HEK293 (cell line): ENCODE measurements at regions of chr17 and their contacts with region 1.

Region 1: GRCh38 chr17:27353461-27354050 is 59.6 kb downstream of the WSB1 start:
- H3K4me3 ChIP-seq: peak overlapping the region; percentile 79
- H3K27ac ChIP-seq: peak overlapping the region; percentile 85
- H3K4me1 ChIP-seq: no peaks in the 10 kb centered on the region; the same call in 1 of the 2 replicates
- CTCF ChIP-seq: 0 out of 2 replicates have a peak, but pooled peaks have one; percentile 9

Region 2: GRCh38 chr17:27367121-27367991 is 13.8 kb after region 1 on chr17:
- CTCF ChIA-PET with region 1: interaction called, 10 read pairs
- POLR2A ChIA-PET with region 1: no interaction called
- H3K4me3 ChIP-seq: no peak overlapping the region
- H3K27ac ChIP-seq: no peak overlapping the region
- H3K4me1 ChIP-seq: no peaks in the 10 kb centered on the region
- CTCF ChIP-seq: no peak